Thyroid gland (tissue), 4 donors: ENCODE measurements at regions of chr4 and their contacts with region 1.

Region 1: GRCh38 chr4:6327041-6327917 is 57.6 kb downstream of the WFS1 start:
- DNase-seq: peak; percentile 79 to 83
- H3K4me3 ChIP-seq: no peak overlapping the region
- H3K27ac ChIP-seq: no peak overlapping the region
- H3K4me1 ChIP-seq: no peaks in the 10 kb centered on the region
- H3K27me3 ChIP-seq: no peaks in the 10 kb centered on the region
- CTCF ChIP-seq: peak; percentile 89 to 98 (median 94)
- POLR2A ChIP-seq: no peak

Region 2: GRCh38 chr4:5998333-5998936 is 328.8 kb before region 1 on chr4:
- intact Hi-C with region 1: loop called (anchors 5 kb)
- DNase-seq: peak; percentile 73 to 74
- H3K4me3 ChIP-seq: no peak overlapping the region
- H3K27ac ChIP-seq: no peak overlapping the region
- H3K4me1 ChIP-seq: no peaks in the 10 kb centered on the region
- H3K27me3 ChIP-seq: no peaks in the 10 kb centered on the region
- CTCF ChIP-seq: peak; percentile 83 to 95 (median 90)
- POLR2A ChIP-seq: no peak

Region 3: DNA sequence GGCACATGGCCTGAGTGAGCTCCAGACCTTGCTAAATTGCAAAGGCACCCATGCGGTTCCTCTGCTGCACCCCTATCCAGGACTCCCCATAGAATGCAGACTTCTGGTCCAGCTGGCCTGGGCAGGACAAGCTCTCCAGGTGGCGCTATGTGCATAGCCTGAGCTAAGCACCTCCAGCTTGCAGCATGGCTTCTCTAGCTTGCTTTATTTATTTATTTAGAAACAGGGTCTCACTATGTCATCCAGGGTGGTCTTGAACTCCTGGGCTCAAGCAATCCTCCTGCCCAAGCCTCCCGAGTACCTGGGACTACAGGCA is 63.1 kb before region 1 on chr4:
- intact Hi-C with region 1: loop called (anchors 5 kb)
- DNase-seq: peak; percentile 60 to 61
- H3K4me3 ChIP-seq: no peak overlapping the region
- H3K27ac ChIP-seq: no peak overlapping the region
- H3K4me1 ChIP-seq: peaks cover 0 to 3% of the 10 kb centered on the region in 2 donors
- H3K27me3 ChIP-seq: no peaks in the 10 kb centered on the region
- CTCF ChIP-seq: peak; percentile 19 to 59 (median 48)
- POLR2A ChIP-seq: no peak